ENCODE measurements at regions of chr21 and their contacts with region 1.

Region 1: DNA sequence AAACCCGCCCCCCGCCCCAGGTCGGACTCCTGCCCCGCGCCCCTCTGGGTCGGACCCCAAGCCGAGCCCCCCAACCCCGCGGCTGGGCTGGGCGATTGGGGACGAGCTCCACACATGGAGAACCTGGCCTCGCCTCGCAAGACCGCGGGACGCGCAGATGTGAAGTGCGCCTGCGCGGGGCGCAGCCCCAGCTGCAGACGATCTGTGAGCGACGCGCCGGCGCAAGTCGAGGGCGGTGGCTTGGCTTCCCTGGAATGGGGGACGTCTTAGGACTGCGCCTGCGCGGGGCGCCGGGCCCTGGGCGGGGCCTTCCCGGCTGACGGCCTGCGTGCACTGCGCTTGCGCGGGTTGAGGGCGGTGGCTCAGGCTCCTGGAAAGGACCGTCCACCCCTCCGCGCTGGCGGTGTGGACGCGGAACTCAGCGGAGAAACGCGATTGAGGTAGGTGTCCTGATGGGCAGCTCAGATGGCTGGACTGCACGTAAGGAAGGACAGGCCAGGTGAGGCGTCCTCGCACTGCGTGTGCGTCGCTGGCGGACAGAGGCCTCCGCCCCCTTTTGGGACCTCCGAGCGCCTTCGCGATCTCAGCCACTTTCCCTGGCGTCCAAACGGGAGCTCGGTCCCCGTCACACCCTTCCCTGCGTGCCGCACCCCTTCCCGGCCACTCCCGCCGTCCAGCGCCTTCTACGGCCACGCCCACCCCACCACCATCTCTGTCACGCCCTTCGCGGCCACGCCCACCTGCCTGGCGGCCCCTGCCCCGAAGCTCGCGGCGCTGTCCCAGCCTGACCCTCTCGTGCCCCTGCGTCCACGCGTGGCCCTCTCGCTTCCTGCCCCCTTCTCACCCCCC is at the start of gene PRMT2:
- DNase-seq: peak; percentile 97 to 99 (median 98)
- H3K4me3 ChIP-seq: peak within 1 kb of the TSS; percentile 87
- H3K4me3 Mint-ChIP-seq: peak within 1 kb of the TSS; percentile 93 to 98 (median 95)
- H3K27ac ChIP-seq: peak within 1 kb of the TSS; percentile 95
- H3K27ac Mint-ChIP-seq: peak within 1 kb of the TSS; percentile 86 to 100 (median 98)
- H3K4me1 ChIP-seq: peaks cover 73% of the 10 kb centered on the region
- H3K4me1 Mint-ChIP-seq: peaks cover 58 to 77% (median 74%) of the 10 kb centered on the region in 3 donors
- H3K27me3 ChIP-seq: no peaks in the 10 kb centered on the region
- H3K27me3 Mint-ChIP-seq: peaks cover 1 to 7% of the 10 kb centered on the region in 2 donors
- total RNA-seq, gene PRMT2: 69.8 to 71.6 TPM

Region 2: DNA sequence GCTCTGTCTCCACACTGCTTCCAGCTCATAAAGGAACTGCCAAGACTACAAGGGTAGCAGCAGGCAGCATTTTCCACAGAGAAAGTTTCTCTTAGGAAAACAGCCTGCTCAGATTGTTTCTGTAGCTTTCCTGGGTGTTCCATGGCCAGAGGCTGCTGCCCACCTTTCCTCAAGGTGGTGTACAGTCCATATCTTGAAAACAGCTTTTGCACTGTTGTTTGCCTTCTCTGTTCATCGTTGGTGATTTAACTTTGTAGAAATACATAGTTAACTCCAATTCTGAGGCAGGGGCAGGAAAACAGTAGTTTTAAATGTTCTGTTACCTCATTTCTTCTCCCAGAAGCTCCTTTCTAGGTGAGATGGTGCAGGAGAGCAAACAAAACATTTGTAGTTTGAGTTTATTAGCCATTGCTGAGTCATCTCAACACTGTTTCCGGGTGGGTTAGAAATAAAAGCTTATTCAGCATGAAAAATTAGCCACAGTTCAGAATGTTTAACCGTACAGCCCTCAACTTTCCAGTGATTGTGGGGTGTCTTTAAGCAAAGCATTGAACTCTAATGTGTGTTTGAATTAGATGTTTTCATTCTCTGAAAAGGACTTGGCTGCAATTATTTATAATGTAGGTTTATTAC is 135.2 kb before region 1 on chr21:
- CTCF ChIA-PET with region 1: interaction called, 10 read pairs
- POLR2A ChIA-PET with region 1: no interaction called
- DNase-seq: peak in 2 of 5 donors; percentile 5 to 10
- H3K4me3 ChIP-seq: no peak overlapping the region
- H3K4me3 Mint-ChIP-seq: peak overlapping the region in 4 of 7 donors; percentile 15 to 43 (median 22)
- H3K27ac ChIP-seq: peak overlapping the region; percentile 39
- H3K27ac Mint-ChIP-seq: peak overlapping the region; percentile 36 to 90 (median 64)
- H3K4me1 ChIP-seq: peaks cover 13% of the 10 kb centered on the region
- H3K4me1 Mint-ChIP-seq: peaks cover 29 to 48% (median 40%) of the 10 kb centered on the region in 3 donors
- H3K27me3 ChIP-seq: no peaks in the 10 kb centered on the region
- H3K27me3 Mint-ChIP-seq: no peaks in the 10 kb centered on the region

Region 3: DNA sequence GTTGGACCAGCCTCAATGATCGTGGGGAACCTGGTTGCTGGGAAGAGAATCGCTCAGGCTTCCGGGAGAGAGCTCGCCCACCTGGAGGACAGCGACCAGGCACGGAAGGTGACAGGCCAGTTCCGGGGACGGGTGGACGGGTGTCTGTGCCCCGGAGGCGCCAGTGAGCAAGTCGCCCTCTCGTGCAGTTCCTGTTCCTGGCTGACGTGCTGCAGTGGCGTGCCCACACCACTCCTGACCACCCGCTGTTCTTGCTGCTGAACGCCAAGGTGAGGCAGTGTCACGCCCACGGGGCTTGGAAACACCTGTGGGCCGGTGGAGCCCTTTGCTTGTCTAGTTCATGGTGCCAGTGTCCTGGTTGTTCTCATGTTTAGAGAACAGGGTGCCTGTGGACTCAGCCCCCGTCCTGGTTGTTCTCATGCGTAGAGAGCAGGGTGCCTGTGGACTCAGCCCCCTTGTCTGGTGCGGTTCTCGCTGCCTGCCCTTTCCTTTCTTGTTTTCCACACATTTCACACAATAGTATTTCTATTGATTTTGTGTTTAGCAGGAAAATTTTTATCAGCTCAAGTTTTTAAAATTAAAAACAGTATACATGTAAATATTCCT is 83.8 kb before region 1 on chr21:
- CTCF ChIA-PET with region 1: interaction called, 17 read pairs
- POLR2A ChIA-PET with region 1: interaction called, 24 read pairs
- DNase-seq: peak; percentile 18 to 67 (median 48)
- H3K4me3 ChIP-seq: peak overlapping the region; percentile 29
- H3K4me3 Mint-ChIP-seq: peak overlapping the region; percentile 70 to 89 (median 79)
- H3K27ac ChIP-seq: peak overlapping the region; percentile 72
- H3K27ac Mint-ChIP-seq: peak overlapping the region; percentile 94 to 100 (median 99)
- H3K4me1 ChIP-seq: peaks cover 75% of the 10 kb centered on the region
- H3K4me1 Mint-ChIP-seq: peaks cover 53 to 65% (median 55%) of the 10 kb centered on the region in 3 donors
- H3K27me3 ChIP-seq: no peaks in the 10 kb centered on the region
- H3K27me3 Mint-ChIP-seq: no peaks in the 10 kb centered on the region

Region 4: GRCh38 chr21:46559291-46559983 is 76.1 kb before region 1 on chr21:
- CTCF ChIA-PET with region 1: interaction called, 3 read pairs
- POLR2A ChIA-PET with region 1: interaction called, 21 read pairs
- DNase-seq: peak; percentile 38 to 87 (median 71)
- H3K4me3 ChIP-seq: peak overlapping the region; percentile 21
- H3K4me3 Mint-ChIP-seq: peak overlapping the region; percentile 55 to 83 (median 81)
- H3K27ac ChIP-seq: peak overlapping the region; percentile 20
- H3K27ac Mint-ChIP-seq: peak overlapping the region; percentile 95 to 99 (median 96)
- H3K4me1 ChIP-seq: peaks cover 83% of the 10 kb centered on the region
- H3K4me1 Mint-ChIP-seq: peaks cover 39 to 48% (median 46%) of the 10 kb centered on the region in 3 donors
- H3K27me3 ChIP-seq: no peaks in the 10 kb centered on the region
- H3K27me3 Mint-ChIP-seq: peaks cover 0 to 2% of the 10 kb centered on the region in 2 donors

Region 5: DNA sequence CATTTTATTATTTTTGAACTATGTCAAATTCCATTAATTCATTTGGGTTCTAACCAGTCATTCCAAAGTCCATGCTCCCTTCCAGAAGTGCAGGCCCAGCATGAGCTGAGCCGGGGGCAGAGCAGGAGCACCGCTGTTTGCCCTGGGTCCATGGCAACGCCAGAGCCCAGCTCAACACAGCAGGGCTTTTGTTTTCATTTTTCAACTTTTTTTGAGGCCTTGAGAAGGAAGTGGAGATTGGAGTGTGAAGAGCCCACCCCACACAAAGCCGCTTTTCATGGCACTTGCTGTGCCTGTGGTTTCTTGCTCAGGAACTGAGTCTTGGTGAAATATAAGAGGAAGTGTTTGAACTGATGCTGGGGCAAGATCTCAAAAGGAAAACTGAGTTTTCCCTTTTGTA is 13.3 kb before region 1 on chr21:
- CTCF ChIA-PET with region 1: interaction called, 6 read pairs
- POLR2A ChIA-PET with region 1: interaction called, 19 read pairs
- DNase-seq: peak in 4 of 5 donors; percentile 24 to 87 (median 79)
- H3K4me3 ChIP-seq: peak overlapping the region; percentile 3
- H3K4me3 Mint-ChIP-seq: peak overlapping the region; percentile 59 to 75 (median 71)
- H3K27ac ChIP-seq: peak overlapping the region; percentile 64
- H3K27ac Mint-ChIP-seq: peak overlapping the region; percentile 90 to 98 (median 96)
- H3K4me1 ChIP-seq: peaks cover 68% of the 10 kb centered on the region
- H3K4me1 Mint-ChIP-seq: peaks cover 44 to 69% (median 51%) of the 10 kb centered on the region in 3 donors
- H3K27me3 ChIP-seq: no peaks in the 10 kb centered on the region
- H3K27me3 Mint-ChIP-seq: peaks cover 0 to 3% of the 10 kb centered on the region in 2 donors

Region 6: DNA sequence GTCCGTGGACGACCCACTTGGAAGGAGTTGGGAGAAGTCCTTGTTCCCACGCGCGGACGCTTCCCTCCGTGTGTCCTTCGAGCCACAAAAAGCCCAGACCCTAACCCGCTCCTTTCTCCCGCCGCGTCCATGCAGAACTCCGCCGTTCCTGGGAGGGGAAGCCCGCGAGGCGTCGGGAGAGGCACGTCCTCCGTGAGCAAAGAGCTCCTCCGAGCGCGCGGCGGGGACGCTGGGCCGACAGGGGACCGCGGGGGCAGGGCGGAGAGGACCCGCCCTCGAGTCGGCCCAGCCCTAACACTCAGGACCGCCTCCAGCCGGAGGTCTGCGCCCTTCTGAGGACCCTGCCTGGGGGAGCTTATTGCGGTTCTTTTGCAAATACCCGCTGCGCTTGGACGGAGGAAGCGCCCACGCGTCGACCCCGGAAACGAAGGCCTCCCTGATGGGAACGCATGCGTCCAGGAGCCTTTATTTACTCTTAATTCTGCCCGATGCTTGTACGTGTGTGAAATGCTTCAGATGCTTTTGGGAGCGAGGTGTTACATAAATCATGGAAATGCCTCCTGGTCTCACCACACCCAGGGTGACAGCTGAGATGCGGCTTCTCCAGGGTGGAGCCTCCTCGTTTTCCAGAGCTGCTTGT is 32.3 kb after region 1 on chr21:
- CTCF ChIA-PET with region 1: no interaction called
- POLR2A ChIA-PET with region 1: no interaction called
- DNase-seq: no peak
- H3K4me3 ChIP-seq: peak overlapping the region; percentile 49
- H3K4me3 Mint-ChIP-seq: peak overlapping the region; percentile 81 to 92 (median 83)
- H3K27ac ChIP-seq: no peak overlapping the region
- H3K27ac Mint-ChIP-seq: peak overlapping the region in 2 of 8 donors; percentile 46 to 50
- H3K4me1 ChIP-seq: no peaks in the 10 kb centered on the region
- H3K4me1 Mint-ChIP-seq: peaks cover 10 to 16% (median 14%) of the 10 kb centered on the region in 3 donors
- H3K27me3 ChIP-seq: no peaks in the 10 kb centered on the region
- H3K27me3 Mint-ChIP-seq: peaks cover 3 to 4% of the 10 kb centered on the region in 2 donors